ENCODE measurements at regions of chrX and their contacts with region 1.

Region 1: GRCh38 chrX:87664381-87664780 is 146.8 kb downstream of the KLHL4 start:
- DNase-seq: no peak
- ATAC-seq: no peak

Region 2: GRCh38 chrX:87338510-87338909 is 325.9 kb before region 1 on chrX:
- intact Hi-C with region 1: loop called in 1 of 2 experiments (anchors 2 kb)
- DNase-seq: no peak
- ATAC-seq: no peak

Measured in left cardiac atrium (tissue), 4 donors.